Mammary epithelial cell (primary cell): ENCODE measurements at regions of chr16 and their contacts with region 1.

Region 1: DNA sequence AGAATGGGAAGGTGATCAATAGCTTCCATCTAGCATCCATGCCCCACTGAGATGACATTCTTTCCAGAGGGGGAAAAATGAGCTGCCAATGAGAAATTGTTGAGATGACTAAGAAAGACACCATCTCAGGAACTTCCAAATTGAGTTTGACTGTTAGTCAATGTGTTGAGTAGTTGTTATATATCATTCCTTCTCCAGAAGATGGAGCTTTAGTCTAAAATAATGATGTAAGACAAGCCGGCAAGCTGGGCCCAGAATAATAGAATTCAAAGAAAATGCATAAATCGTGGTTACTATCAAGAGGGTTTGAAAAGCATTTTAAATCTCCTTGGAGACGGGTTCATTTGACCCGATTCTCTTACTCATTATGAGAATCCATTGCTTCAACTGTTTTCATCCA is 71.0 kb upstream of the ATF7IP2 start:
- DNase-seq: peak; percentile 53
- H3K4me3 ChIP-seq: no peak overlapping the region
- H3K27ac ChIP-seq: no peak overlapping the region
- H3K4me1 ChIP-seq: no peaks in the 10 kb centered on the region
- H3K27me3 ChIP-seq: no peaks in the 10 kb centered on the region
- CTCF ChIP-seq: peak; percentile 11 to 52

Region 2: DNA sequence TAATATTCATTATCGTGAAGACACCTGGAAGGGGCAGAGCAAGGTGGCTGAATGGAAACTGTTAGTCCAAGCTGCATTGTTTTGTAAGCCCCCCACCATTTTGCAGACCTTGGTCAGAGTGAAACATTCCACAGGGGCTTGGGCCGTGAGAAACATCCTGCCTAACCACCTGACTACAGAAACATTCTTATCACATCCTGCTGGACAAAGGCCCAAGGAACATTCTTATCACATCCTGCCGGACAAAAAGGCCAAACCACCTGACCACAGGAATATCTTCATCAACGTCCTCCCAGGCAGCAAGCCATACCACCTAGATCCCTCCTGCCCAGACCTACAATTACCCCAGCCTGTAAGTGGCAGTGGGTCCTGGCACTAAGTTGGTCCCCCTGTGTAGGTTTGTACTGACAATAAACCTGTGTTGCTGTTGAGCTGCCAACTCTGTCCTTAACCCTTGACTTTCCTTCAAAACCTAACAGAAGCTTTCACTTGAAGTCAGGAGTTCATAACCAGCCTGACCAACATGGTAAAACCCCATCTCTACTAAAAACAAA is 90.7 kb after region 1 on chr16:
- CTCF ChIA-PET with region 1: no interaction called
- dilution Hi-C with region 1: no loop called
- in situ Hi-C with region 1: no loop called
- intact Hi-C with region 1: no loop called
- DNase-seq: no peak
- H3K4me3 ChIP-seq: no peak overlapping the region
- H3K27ac ChIP-seq: no peak overlapping the region
- H3K4me1 ChIP-seq: no peaks in the 10 kb centered on the region
- H3K27me3 ChIP-seq: no peaks in the 10 kb centered on the region
- CTCF ChIP-seq: no peak

Region 3: GRCh38 chr16:10428433-10429168 is 113.8 kb after region 1 on chr16:
- CTCF ChIA-PET with region 1: no interaction called
- dilution Hi-C with region 1: no loop called
- in situ Hi-C with region 1: no loop called
- intact Hi-C with region 1: loop called (anchors 5 kb)
- DNase-seq: peak; percentile 59
- H3K4me3 ChIP-seq: no peak overlapping the region
- H3K27ac ChIP-seq: peak overlapping the region; percentile 82
- H3K4me1 ChIP-seq: peaks cover 13% of the 10 kb centered on the region
- H3K27me3 ChIP-seq: no peaks in the 10 kb centered on the region
- CTCF ChIP-seq: no peak

Region 4: GRCh38 chr16:10497132-10498101 is 182.6 kb after region 1 on chr16:
- CTCF ChIA-PET with region 1: no interaction called
- dilution Hi-C with region 1: no loop called
- in situ Hi-C with region 1: no loop called
- intact Hi-C with region 1: loop called (anchors 5 kb)
- DNase-seq: peak; percentile 80
- H3K4me3 ChIP-seq: no peak overlapping the region
- H3K27ac ChIP-seq: no peak overlapping the region
- H3K4me1 ChIP-seq: peaks cover 5% of the 10 kb centered on the region
- H3K27me3 ChIP-seq: no peaks in the 10 kb centered on the region
- CTCF ChIP-seq: no peak

Region 5: GRCh38 chr16:10737068-10737625 is 422.3 kb after region 1 on chr16:
- CTCF ChIA-PET with region 1: no interaction called
- dilution Hi-C with region 1: no loop called
- in situ Hi-C with region 1: loop called (anchors 25 kb)
- intact Hi-C with region 1: loop called (anchors 2 kb)
- DNase-seq: peak; percentile 50
- H3K4me3 ChIP-seq: no peak overlapping the region
- H3K27ac ChIP-seq: no peak overlapping the region
- H3K4me1 ChIP-seq: peaks cover 8% of the 10 kb centered on the region
- H3K27me3 ChIP-seq: no peaks in the 10 kb centered on the region
- CTCF ChIP-seq: peak; percentile 85 to 90